Gastrocnemius medialis (tissue), 4 donors: ENCODE measurements at regions of chr7 and their contacts with region 1.

Region 1: DNA sequence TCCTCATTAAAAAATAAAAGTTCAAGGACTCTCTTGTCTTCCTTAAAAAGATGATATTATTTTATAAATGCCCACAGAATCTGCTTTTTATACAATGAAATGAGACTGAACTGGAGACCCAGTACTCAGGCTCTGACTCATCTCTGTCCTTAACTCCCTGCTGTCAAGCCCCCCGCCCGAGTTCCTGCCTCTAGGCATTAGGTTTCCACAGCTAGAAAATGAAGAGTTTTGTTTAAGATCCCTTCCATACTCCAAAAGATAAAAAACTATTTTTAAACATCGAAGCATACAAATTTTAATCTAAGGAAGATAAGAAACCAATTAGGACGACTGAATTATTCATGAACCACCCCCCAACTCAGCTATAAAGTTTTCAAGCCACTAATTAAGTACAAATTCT is 97.7 kb upstream of the FEZF1 start:
- DNase-seq: no peak
- ATAC-seq: no peak
- H3K4me3 ChIP-seq: no peak overlapping the region
- H3K27ac ChIP-seq: no peak overlapping the region
- H3K4me1 ChIP-seq: no peaks in the 10 kb centered on the region
- H3K27me3 ChIP-seq: no peaks in the 10 kb centered on the region
- CTCF ChIP-seq: no peak
- POLR2A ChIP-seq: no peak

Region 2: GRCh38 chr7:122166708-122167107 is 235.5 kb before region 1 on chr7:
- in situ Hi-C with region 1: no loop called
- intact Hi-C with region 1: no loop called
- DNase-seq: no peak
- ATAC-seq: no peak
- H3K4me3 ChIP-seq: no peak overlapping the region
- H3K27ac ChIP-seq: no peak overlapping the region
- H3K4me1 ChIP-seq: no peaks in the 10 kb centered on the region
- H3K27me3 ChIP-seq: no peaks in the 10 kb centered on the region
- CTCF ChIP-seq: no peak
- POLR2A ChIP-seq: no peak

Region 3: GRCh38 chr7:122188784-122189183 is 213.5 kb before region 1 on chr7:
- in situ Hi-C with region 1: no loop called
- intact Hi-C with region 1: no loop called
- DNase-seq: no peak
- ATAC-seq: no peak
- H3K4me3 ChIP-seq: no peak overlapping the region
- H3K27ac ChIP-seq: no peak overlapping the region
- H3K4me1 ChIP-seq: no peaks in the 10 kb centered on the region
- H3K27me3 ChIP-seq: no peaks in the 10 kb centered on the region
- CTCF ChIP-seq: no peak
- POLR2A ChIP-seq: no peak

Region 4: GRCh38 chr7:122350701-122351100 is 51.5 kb before region 1 on chr7:
- in situ Hi-C with region 1: no loop called
- intact Hi-C with region 1: loop called (anchors 10 kb)
- DNase-seq: no peak
- ATAC-seq: no peak
- H3K4me3 ChIP-seq: no peak overlapping the region
- H3K27ac ChIP-seq: no peak overlapping the region
- H3K4me1 ChIP-seq: no peaks in the 10 kb centered on the region
- H3K27me3 ChIP-seq: no peaks in the 10 kb centered on the region
- CTCF ChIP-seq: no peak
- POLR2A ChIP-seq: no peak

Region 5: DNA sequence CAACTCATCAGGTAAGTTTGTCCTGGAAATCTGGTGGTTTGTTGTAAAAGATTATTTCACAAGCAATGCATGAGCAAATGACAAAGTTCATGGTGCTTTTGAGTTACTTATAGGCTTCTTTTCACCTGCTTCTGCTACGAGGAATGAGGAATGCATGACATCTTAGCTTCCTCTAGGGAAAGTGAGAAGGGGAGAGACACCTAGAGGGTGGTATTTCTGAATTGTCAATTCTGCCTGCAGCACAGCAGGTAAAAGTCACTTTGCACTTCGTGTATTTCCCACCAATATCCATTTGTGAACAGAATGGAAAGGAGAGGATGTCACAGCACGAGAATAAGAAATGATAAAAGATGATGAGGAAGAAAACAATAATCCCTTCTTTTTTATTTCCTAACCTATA is 55.7 kb after region 1 on chr7:
- in situ Hi-C with region 1: no loop called
- intact Hi-C with region 1: no loop called
- DNase-seq: no peak
- ATAC-seq: no peak
- H3K4me3 ChIP-seq: no peak overlapping the region
- H3K27ac ChIP-seq: no peak overlapping the region
- H3K4me1 ChIP-seq: no peaks in the 10 kb centered on the region
- H3K27me3 ChIP-seq: no peaks in the 10 kb centered on the region
- CTCF ChIP-seq: no peak
- POLR2A ChIP-seq: no peak

Region 6: DNA sequence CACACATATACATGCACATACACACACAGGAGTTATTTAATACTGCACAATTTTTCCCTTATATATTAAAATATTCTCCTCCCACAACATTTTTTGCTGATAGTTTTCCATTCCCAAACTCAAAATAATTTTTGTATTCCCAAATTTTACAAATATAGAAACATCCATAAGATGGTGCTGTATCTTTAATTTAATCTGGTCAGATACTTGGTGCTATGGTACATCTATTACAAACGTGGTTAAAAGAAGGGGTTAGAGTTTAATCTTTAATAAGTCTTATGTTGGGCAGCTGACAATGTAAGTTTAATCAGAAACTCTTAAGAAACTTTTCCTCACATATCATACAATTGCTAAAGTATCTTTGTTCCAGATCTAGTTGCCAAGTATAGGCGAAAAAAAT is 494.3 kb after region 1 on chr7:
- in situ Hi-C with region 1: no loop called
- intact Hi-C with region 1: no loop called
- DNase-seq: no peak
- ATAC-seq: no peak
- H3K4me3 ChIP-seq: no peak overlapping the region
- H3K27ac ChIP-seq: no peak overlapping the region
- H3K4me1 ChIP-seq: no peaks in the 10 kb centered on the region
- H3K27me3 ChIP-seq: no peaks in the 10 kb centered on the region
- CTCF ChIP-seq: no peak
- POLR2A ChIP-seq: no peak